Dendritic cell treated with granulocyte-macrophage colony-stimulating factor and Interleukin-4, amounts not matched to agents 40 ng/mL and 50 ng/mL, for 4 days (primary cell): ENCODE measurements at regions of chrX and their contacts with region 1.

Region 1: GRCh38 chrX:153925739-153926546 is at the start of gene ARHGAP4:
- H3K4me3 Mint-ChIP-seq: peak within 1 kb of the TSS; percentile 90
- H3K27ac Mint-ChIP-seq: peak within 1 kb of the TSS; percentile 95
- H3K4me1 Mint-ChIP-seq: peaks cover 59% of the 10 kb centered on the region
- H3K27me3 Mint-ChIP-seq: no peaks in the 10 kb centered on the region

Region 2: GRCh38 chrX:153794018-153794896 is 131.7 kb before region 1 on chrX and contains the starts of genes IDH3G and SSR4:
- intact Hi-C with region 1: loop called (anchors 1 kb)
- H3K4me3 Mint-ChIP-seq: peak within 1 kb of the TSS; percentile 93
- H3K27ac Mint-ChIP-seq: peak within 1 kb of the TSS; percentile 89
- H3K4me1 Mint-ChIP-seq: peaks cover 27% of the 10 kb centered on the region
- H3K27me3 Mint-ChIP-seq: no peaks in the 10 kb centered on the region